PC-3 (cell line): ENCODE measurements at regions of chr6 and their contacts with region 1.

Region 1: GRCh38 chr6:24689964-24690363 is 23.1 kb downstream of the ACOT13 start:
- DNase-seq: no peak
- ATAC-seq: no peak
- H3K4me3 ChIP-seq: no peak overlapping the region
- H3K27ac ChIP-seq: no peak overlapping the region
- H3K4me1 ChIP-seq: no peaks in the 10 kb centered on the region
- H3K27me3 ChIP-seq: no peaks in the 10 kb centered on the region
- CTCF ChIP-seq: no peak

Region 2: DNA sequence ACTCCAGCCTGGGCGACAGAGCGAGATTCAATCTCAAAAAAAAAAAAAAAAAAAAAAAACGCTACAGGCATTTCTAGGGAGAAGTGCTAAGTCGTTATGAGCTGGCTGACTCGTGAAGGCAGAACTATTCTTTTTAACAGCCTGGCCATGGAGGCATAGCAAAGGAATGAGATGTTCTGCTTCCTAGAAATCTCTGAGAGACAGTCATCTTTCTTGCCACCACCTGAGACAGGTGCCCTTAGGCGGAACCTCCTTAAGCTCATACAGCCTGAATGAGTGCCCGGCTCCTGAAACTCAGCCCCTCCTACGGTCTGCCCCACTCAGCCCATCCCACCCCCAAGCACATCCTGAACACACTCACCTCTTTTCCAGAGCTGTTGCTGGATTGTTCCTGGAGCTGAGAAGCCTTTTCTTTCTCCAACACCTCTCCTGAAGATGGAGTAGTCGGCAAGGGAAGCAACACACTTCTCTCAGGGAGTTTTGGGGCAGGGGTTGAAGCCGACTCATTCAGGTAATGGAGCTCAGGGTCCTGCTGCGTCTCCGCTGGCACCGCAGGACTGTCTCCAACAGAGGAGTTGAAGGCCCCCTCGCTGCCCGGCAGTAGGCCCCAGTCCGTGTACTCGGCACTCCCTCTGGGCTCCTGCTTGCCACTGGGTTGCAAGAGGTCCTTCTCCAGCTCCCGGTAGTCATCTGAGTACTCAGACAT is 94.3 kb before region 1 on chr6:
- CTCF ChIA-PET with region 1: no interaction called
- POLR2A ChIA-PET with region 1: no interaction called
- intact Hi-C with region 1: no loop called
- DNase-seq: no peak
- ATAC-seq: no peak
- H3K4me3 ChIP-seq: no peak overlapping the region
- H3K27ac ChIP-seq: no peak overlapping the region
- H3K4me1 ChIP-seq: no peaks in the 10 kb centered on the region
- H3K27me3 ChIP-seq: no peaks in the 10 kb centered on the region
- CTCF ChIP-seq: no peak

Region 3: GRCh38 chr6:24655215-24655614 is 34.7 kb before region 1 on chr6:
- CTCF ChIA-PET with region 1: no interaction called
- POLR2A ChIA-PET with region 1: no interaction called
- intact Hi-C with region 1: no loop called
- DNase-seq: no peak
- ATAC-seq: no peak
- H3K4me3 ChIP-seq: no peak overlapping the region
- H3K27ac ChIP-seq: no peak overlapping the region
- H3K4me1 ChIP-seq: peaks cover 10% of the 10 kb centered on the region; the same call in 1 of the 2 replicates
- H3K27me3 ChIP-seq: no peaks in the 10 kb centered on the region
- CTCF ChIP-seq: no peak

Region 4: DNA sequence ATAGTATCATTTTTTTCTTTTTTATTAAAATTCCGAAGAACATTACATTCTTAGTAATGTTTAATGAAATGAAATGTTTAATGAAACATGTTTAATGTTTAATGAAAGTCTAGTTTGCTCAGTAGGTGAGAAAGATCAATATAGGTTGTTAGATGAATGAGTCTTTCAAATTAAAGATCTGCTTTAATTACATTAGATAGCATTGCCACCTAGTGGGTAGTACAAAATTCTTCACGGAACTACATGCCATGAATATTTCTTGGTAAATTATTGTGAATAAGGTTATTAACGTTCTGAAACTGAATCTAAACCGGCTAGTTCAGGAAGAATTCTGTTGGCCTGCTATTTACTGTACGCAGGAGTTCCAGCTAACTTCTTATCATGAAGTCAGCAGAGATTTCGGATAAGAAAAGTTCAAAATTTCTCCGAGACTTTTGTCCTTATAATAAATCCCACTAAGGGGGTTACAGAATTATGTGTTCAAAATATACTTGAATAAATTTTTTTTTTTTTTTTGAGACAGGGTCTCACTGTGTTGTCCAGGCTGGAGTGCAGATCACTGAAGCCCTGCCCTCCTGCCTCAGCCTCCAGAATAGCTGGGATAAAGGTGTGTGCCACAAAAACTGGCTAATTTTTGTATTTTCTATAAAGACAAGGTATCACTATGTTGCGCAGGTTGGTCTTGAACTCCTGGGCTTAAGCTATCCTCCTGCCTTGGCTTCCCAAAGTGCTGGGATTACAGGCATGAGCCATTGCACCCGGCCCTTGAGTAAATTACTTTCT is 76.9 kb after region 1 on chr6:
- CTCF ChIA-PET with region 1: no interaction called
- POLR2A ChIA-PET with region 1: no interaction called
- intact Hi-C with region 1: loop called (anchors 2 kb)
- DNase-seq: peak; percentile 62
- ATAC-seq: peak; percentile 75
- H3K4me3 ChIP-seq: no peak overlapping the region
- H3K27ac ChIP-seq: no peak overlapping the region
- H3K4me1 ChIP-seq: no peaks in the 10 kb centered on the region
- H3K27me3 ChIP-seq: no peaks in the 10 kb centered on the region
- CTCF ChIP-seq: peak; percentile 84

Region 5: GRCh38 chr6:24949020-24949569 is 259.1 kb after region 1 on chr6:
- CTCF ChIA-PET with region 1: no interaction called
- POLR2A ChIA-PET with region 1: no interaction called
- intact Hi-C with region 1: no loop called
- DNase-seq: no peak
- ATAC-seq: no peak
- H3K4me3 ChIP-seq: no peak overlapping the region
- H3K27ac ChIP-seq: no peak overlapping the region
- H3K4me1 ChIP-seq: no peaks in the 10 kb centered on the region
- H3K27me3 ChIP-seq: peaks cover 16% of the 10 kb centered on the region; the same call in 1 of the 2 replicates
- CTCF ChIP-seq: no peak

Region 6: DNA sequence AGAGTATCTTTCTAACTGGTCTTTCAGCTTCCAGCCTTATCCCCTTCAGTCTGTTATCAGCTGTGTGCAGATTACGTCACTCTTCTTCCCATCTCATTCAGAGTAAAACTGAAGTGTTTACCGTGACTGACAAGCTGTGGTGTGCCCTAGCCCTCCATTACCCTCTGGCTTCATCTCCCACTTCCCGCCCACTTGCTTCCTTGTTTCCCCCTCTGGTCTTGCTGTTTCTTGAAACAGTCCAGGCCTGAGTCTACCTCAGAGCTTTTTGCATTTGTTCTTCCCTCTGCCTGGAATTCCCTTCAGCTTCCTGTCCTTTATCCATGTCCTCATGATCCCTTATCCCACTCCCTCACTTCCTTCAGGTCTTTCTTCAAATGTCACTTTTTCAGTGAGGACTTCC is 656.1 kb after region 1 on chr6:
- CTCF ChIA-PET with region 1: no interaction called
- POLR2A ChIA-PET with region 1: no interaction called
- intact Hi-C with region 1: no loop called
- DNase-seq: no peak
- ATAC-seq: no peak
- H3K4me3 ChIP-seq: no peak overlapping the region
- H3K27ac ChIP-seq: no peak overlapping the region
- H3K4me1 ChIP-seq: no peaks in the 10 kb centered on the region
- H3K27me3 ChIP-seq: no peaks in the 10 kb centered on the region
- CTCF ChIP-seq: no peak